Heart right ventricle (tissue), 16 donors: ENCODE measurements at regions of chr11 and their contacts with region 1.

Region 1: DNA sequence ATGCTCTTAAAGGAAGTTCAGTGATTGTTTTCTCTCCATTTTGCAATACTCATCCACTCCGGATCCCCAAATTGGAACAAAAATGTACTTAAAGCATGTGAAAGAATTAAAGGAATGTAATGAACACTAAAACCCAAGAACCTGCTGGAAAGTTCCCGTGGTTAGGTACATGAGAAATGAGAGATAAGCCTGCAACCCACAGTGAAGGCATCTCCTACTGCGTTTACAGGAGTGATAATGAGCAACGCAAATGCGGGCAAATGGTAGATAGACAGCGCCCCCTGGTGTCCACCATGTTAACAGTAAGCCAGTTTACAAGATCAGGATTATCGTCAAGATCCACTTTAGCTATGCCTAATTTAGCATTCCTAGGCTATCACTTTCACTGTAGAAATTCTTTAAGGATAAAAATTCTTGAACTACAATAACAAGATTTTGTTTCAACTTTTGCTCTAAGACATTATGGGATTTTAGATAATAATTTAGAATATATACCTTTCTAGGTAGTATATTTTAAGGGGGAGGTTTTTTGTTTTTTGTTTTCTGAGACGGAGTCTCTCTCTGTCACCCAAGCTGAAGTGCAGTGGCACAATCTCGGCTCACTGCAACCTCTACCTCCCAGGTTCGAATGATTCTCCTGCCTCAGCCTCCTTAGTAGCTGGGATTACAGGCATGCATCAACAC is 29.9 kb downstream of the ALG9 start:
- DNase-seq: peak; percentile 81 to 89
- ATAC-seq: peak; percentile 81 to 94 (median 90)
- H3K4me3 ChIP-seq: no peak overlapping the region
- H3K27ac ChIP-seq: no peak overlapping the region
- H3K4me1 ChIP-seq: peaks cover 0 to 26% (median 10%) of the 10 kb centered on the region in 9 donors
- H3K27me3 ChIP-seq: no peaks in the 10 kb centered on the region
- CTCF ChIP-seq: peak; percentile 77 to 94 (median 90)

Region 2: GRCh38 chr11:111454561-111455192 is 386.8 kb before region 1 on chr11:
- intact Hi-C with region 1: loop called in 1 of 10 experiments (anchors 10 kb)
- DNase-seq: peak in 1 of 2 donors; percentile 20
- ATAC-seq: peak in 7 of 8 donors; percentile 16 to 68 (median 53)
- H3K4me3 ChIP-seq: no peak overlapping the region
- H3K27ac ChIP-seq: no peak overlapping the region
- H3K4me1 ChIP-seq: no peaks in the 10 kb centered on the region
- H3K27me3 ChIP-seq: peaks cover 0 to 30% (median 10%) of the 10 kb centered on the region in 7 donors
- CTCF ChIP-seq: peak in 8 of 9 donors; percentile 19 to 57 (median 43)

Region 3: DNA sequence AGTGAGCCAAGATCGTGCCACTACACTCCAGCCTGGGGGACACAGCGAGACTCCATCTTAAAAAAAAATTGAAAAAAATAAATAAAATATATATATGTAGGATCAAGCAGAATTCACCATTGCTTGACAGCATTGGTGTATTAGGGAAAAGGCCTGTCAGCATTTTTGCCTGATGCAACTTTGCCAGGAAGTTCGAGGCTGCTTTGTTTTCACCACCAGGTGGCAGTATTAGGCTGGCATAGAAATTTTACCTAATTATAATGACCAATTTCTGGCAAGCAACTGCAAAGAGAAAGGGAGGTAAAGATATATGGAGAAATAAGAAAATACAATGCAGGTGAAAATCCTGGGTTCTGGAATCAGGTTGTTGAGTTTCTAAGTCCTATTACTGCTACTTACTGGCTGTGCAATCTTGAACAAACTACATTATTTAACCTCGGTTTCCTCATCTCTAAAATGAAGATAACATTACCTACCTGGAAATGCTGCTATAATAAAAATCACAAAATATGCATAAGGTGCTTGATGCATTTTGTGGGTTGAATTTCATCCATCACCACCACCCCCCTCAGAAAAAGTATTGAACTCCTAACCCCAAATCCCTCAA is 276.3 kb before region 1 on chr11:
- intact Hi-C with region 1: loop called in 9 of 10 experiments (anchors 1 to 10 kb)
- DNase-seq: peak; percentile 18 to 79
- ATAC-seq: peak in 7 of 8 donors; percentile 30 to 54 (median 39)
- H3K4me3 ChIP-seq: no peak overlapping the region
- H3K27ac ChIP-seq: no peak overlapping the region
- H3K4me1 ChIP-seq: peaks cover 0 to 13% (median 0%) of the 10 kb centered on the region in 9 donors
- H3K27me3 ChIP-seq: no peaks in the 10 kb centered on the region
- CTCF ChIP-seq: peak; percentile 83 to 94 (median 93)

Region 4: GRCh38 chr11:111586388-111586831 is 255.1 kb before region 1 on chr11:
- intact Hi-C with region 1: loop called in 6 of 10 experiments (anchors 1 to 5 kb)
- DNase-seq: peak in 1 of 2 donors; percentile 50
- ATAC-seq: peak in 4 of 8 donors; percentile 27 to 57 (median 44)
- H3K4me3 ChIP-seq: no peak overlapping the region
- H3K27ac ChIP-seq: no peak overlapping the region
- H3K4me1 ChIP-seq: no peaks in the 10 kb centered on the region
- H3K27me3 ChIP-seq: no peaks in the 10 kb centered on the region
- CTCF ChIP-seq: peak; percentile 21 to 73 (median 62)

Region 5: GRCh38 chr11:111788051-111788450 is 53.5 kb before region 1 on chr11:
- intact Hi-C with region 1: loop called in 2 of 10 experiments (anchors 5 to 10 kb)
- DNase-seq: peak; percentile 36 to 77
- ATAC-seq: peak; percentile 92 to 98 (median 94)
- H3K4me3 ChIP-seq: no peak overlapping the region
- H3K27ac ChIP-seq: peak overlapping the region; percentile 65 to 94 (median 86)
- H3K4me1 ChIP-seq: peaks cover 0 to 51% (median 12%) of the 10 kb centered on the region in 9 donors
- H3K27me3 ChIP-seq: no peaks in the 10 kb centered on the region
- CTCF ChIP-seq: no peak

Region 6: DNA sequence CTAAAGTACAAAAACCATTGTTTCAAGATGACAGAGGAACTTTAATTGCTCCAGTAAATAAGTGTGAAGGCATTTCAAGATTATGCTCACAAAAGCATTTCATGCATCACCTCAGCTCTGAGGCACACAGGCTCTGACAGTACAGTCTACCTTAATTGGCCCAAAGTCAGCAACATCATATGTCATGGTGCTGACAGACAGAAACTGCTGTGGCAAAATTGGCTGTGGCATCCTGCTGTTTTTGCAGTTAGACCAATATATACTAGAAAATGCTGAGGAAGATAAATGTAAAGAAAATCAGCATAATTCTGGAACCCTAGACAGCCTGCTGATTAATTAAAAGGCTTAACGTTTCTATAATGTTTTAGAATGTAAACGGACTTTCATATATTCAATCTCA is 40.4 kb before region 1 on chr11:
- intact Hi-C with region 1: no loop called
- DNase-seq: no peak
- ATAC-seq: peak in 3 of 8 donors; percentile 54 to 68 (median 66)
- H3K4me3 ChIP-seq: no peak overlapping the region
- H3K27ac ChIP-seq: no peak overlapping the region
- H3K4me1 ChIP-seq: peaks cover 0 to 10% (median 6%) of the 10 kb centered on the region in 9 donors
- H3K27me3 ChIP-seq: no peaks in the 10 kb centered on the region
- CTCF ChIP-seq: no peak